ENCODE measurements at regions of chr4 and their contacts with region 1.

Region 1: GRCh38 chr4:136864580-136865185 is 667.6 kb downstream of the PCDH18 start:
- DNase-seq: peak; percentile 24
- ATAC-seq: peak; percentile 92
- H3K4me3 ChIP-seq: no peak overlapping the region
- H3K27ac ChIP-seq: no peak overlapping the region
- H3K4me1 ChIP-seq: no peaks in the 10 kb centered on the region
- H3K27me3 ChIP-seq: no peaks in the 10 kb centered on the region
- CTCF ChIP-seq: peak; percentile 62 to 81 (median 69); a peak in 5 of 6 replicates
- EP300 ChIP-seq: no peak
- POLR2A ChIP-seq: no peak
- RAD21 ChIP-seq: peak; percentile 94

Region 2: DNA sequence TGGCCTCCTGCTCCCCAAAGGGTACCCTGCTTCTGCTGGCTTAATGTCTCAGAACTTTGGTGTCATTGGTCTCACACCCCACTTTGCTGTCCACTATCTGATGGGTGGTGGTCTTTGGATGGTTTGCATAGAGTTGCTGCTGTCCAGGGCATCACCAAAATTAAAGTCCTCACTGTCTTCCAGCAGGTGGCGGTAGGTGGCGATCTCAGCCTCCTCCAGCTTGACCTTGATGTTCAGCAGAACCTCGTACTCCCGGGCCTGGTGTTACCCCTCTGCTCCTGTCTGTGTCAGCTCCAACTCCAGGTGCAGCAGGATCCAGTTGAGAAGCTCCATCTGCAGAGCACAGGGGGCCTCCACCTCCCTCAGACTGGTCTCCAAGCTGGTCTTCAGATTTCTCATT is 1493.5 kb before region 1 on chr4:
- CTCF ChIA-PET with region 1: interaction called, 56 read pairs
- POLR2A ChIA-PET with region 1: no interaction called
- RAD21 ChIA-PET with region 1: interaction called, 6 read pairs
- SMC1A ChIA-PET with region 1: interaction called, 11 read pairs
- in situ Hi-C with region 1: loop called (anchors 25 kb)
- intact Hi-C with region 1: loop called (anchors 5 kb)
- DNase-seq: no peak
- ATAC-seq: peak; percentile 81
- H3K4me3 ChIP-seq: no peak overlapping the region
- H3K27ac ChIP-seq: no peak overlapping the region
- H3K4me1 ChIP-seq: no peaks in the 10 kb centered on the region
- H3K27me3 ChIP-seq: no peaks in the 10 kb centered on the region
- CTCF ChIP-seq: peak; percentile 22 to 42 (median 38); a peak in 4 of 6 replicates
- EP300 ChIP-seq: no peak
- POLR2A ChIP-seq: no peak
- RAD21 ChIP-seq: peak; percentile 24; the same call in 1 of the 2 replicates

Region 3: GRCh38 chr4:136424052-136424451 is 440.6 kb before region 1 on chr4:
- CTCF ChIA-PET with region 1: no interaction called
- POLR2A ChIA-PET with region 1: no interaction called
- RAD21 ChIA-PET with region 1: no interaction called
- SMC1A ChIA-PET with region 1: no interaction called
- in situ Hi-C with region 1: no loop called
- intact Hi-C with region 1: loop called (anchors 10 kb)
- DNase-seq: no peak
- ATAC-seq: no peak
- H3K4me3 ChIP-seq: no peak overlapping the region
- H3K27ac ChIP-seq: no peak overlapping the region
- H3K4me1 ChIP-seq: no peaks in the 10 kb centered on the region
- H3K27me3 ChIP-seq: no peaks in the 10 kb centered on the region
- CTCF ChIP-seq: no peak
- EP300 ChIP-seq: no peak
- POLR2A ChIP-seq: no peak
- RAD21 ChIP-seq: no peak

Region 4: DNA sequence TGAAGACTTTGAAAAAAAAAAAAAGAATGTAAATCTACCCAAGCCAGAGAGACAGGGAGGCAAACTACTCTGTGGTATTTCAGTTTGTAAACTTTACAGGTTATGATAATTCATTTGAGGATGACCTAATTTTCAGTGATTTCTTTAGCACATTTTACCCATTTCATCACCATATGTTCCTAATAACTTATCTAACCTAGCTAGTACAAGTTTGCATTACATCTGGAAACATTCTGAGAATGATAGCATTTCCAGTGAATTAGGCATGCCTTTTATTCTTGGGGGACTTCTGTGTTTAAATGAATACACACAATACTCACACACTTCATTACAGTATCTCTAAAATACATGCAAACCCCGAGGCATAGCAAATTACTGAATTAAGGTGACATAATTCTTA is 387.9 kb before region 1 on chr4:
- CTCF ChIA-PET with region 1: no interaction called
- POLR2A ChIA-PET with region 1: no interaction called
- RAD21 ChIA-PET with region 1: no interaction called
- SMC1A ChIA-PET with region 1: no interaction called
- in situ Hi-C with region 1: no loop called
- intact Hi-C with region 1: no loop called
- DNase-seq: no peak
- ATAC-seq: no peak
- H3K4me3 ChIP-seq: no peak overlapping the region
- H3K27ac ChIP-seq: no peak overlapping the region
- H3K4me1 ChIP-seq: no peaks in the 10 kb centered on the region
- H3K27me3 ChIP-seq: no peaks in the 10 kb centered on the region
- CTCF ChIP-seq: no peak
- EP300 ChIP-seq: no peak
- POLR2A ChIP-seq: no peak
- RAD21 ChIP-seq: no peak

Region 5: DNA sequence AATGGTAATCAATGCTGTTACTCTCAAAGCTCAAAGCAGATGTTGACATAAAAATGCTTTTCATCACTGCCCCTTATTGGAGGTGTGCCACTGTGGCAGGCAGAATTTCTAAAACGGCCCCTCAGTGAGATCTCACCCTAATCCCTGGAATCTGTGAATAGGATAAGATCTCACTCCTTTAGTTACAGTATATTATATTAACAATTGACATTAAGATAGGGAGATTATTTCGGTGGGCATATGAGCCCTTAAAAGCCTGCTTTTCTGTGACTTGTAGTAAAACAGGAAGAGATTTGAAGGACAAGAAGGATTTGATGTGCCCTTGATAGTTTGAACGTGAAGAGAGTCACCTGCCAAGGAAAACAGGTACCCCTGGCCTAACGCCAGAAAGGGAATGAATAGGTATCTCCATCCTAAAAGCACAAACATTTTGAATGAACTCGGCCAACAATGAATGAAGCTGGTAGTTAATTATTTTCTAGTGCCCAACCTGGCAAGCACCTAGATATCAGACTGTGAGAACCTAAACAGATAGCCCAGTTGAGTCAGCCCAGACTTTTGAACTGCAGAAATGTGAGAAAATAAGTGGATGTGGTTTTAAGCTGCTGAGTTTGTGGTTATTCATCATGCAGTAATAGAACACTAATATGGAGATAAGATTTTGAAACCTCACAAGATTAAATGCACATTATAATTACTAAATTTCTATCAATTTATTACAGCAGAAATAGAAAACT is 214.0 kb before region 1 on chr4:
- CTCF ChIA-PET with region 1: interaction called, 7 read pairs
- POLR2A ChIA-PET with region 1: interaction called, 3 read pairs
- RAD21 ChIA-PET with region 1: interaction called, 14 read pairs
- SMC1A ChIA-PET with region 1: interaction called, 6 read pairs
- in situ Hi-C with region 1: no loop called
- intact Hi-C with region 1: no loop called
- DNase-seq: peak; percentile 34
- ATAC-seq: peak; percentile 87
- H3K4me3 ChIP-seq: no peak overlapping the region
- H3K27ac ChIP-seq: no peak overlapping the region
- H3K4me1 ChIP-seq: no peaks in the 10 kb centered on the region
- H3K27me3 ChIP-seq: no peaks in the 10 kb centered on the region
- CTCF ChIP-seq: no peak
- EP300 ChIP-seq: peak; percentile 43 to 61; a peak in 2 of 4 replicates
- POLR2A ChIP-seq: no peak
- RAD21 ChIP-seq: no peak

Region 6: DNA sequence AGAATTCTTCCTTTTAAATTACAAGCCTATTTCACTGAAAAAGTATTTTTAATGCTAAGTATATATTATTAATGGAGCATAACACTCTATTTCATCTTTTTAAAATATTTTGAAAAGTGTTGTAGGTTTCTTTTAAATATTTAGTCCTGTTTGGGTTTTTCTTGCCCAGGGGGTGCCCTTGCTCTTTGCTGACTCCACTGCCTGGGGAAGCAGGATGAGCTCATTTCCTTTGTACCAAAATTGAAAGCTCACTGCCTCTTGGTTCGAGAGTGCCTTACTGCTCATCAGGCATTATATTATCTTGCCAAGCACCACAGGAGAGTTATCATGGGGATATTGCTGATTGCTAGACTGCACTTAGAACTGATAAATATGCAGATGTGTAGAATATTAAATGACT is 151.5 kb before region 1 on chr4:
- CTCF ChIA-PET with region 1: interaction called, 81 read pairs
- POLR2A ChIA-PET with region 1: no interaction called
- RAD21 ChIA-PET with region 1: interaction called, 103 read pairs
- SMC1A ChIA-PET with region 1: interaction called, 76 read pairs
- in situ Hi-C with region 1: no loop called
- intact Hi-C with region 1: loop called (anchors 5 kb)
- DNase-seq: no peak
- ATAC-seq: peak; percentile 95
- H3K4me3 ChIP-seq: no peak overlapping the region
- H3K27ac ChIP-seq: no peak overlapping the region
- H3K4me1 ChIP-seq: no peaks in the 10 kb centered on the region
- H3K27me3 ChIP-seq: no peaks in the 10 kb centered on the region
- CTCF ChIP-seq: peak in 1 of 3 experiments; percentile 32; a peak in 1 of 6 replicates
- EP300 ChIP-seq: no peak
- POLR2A ChIP-seq: no peak
- RAD21 ChIP-seq: peak; percentile 36; the same call in 1 of the 2 replicates